Dorsolateral prefrontal cortex (tissue), 120 donors: ENCODE measurements at regions of chr10 and their contacts with region 1.

Region 1: DNA sequence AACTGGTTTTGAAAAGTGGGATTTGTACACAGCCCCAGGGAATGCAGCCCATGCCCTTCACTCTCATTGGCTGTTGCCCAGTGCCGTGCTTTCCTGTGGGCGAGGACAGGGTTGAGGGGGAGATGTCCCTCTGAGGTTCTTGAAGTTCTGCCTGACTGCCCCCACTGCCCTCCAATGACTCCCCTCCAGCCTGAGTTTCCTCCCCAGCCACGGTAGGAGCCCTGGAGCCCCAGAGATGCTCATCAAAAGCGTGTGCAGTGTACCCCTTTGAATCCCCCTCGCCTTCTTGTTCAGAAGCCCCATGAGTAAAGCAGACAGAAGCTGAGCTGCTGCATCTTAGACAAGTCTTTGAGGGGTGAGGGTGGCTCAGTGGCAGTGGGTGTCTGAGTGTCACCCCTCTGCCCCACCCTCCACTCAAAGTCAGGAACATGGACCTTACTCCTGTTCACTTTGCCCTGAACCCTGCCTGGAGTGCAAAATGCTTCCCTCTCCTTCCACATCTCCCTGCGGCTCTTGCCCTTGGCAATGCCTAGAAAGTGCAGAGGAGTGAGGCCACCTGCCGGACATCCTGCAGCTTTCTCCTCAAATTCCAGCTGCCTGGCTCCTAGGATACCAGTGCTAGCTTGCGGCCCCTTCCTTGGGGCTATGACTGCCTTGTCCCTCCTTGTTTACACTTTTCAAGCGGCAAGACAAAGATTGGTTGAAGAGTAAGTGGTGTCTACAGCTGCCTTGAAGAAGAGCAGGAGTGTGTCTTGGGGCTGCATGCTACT is 19.9 kb downstream of the FAM241B start:
- DNase-seq: peak in 1 of 10 donors; percentile 21
- H3K4me3 ChIP-seq: no peak overlapping the region
- H3K27ac ChIP-seq: no peak overlapping the region
- H3K27me3 ChIP-seq: peaks cover 0 to 15% (median 0%) of the 10 kb centered on the region in 45 donors
- CTCF ChIP-seq: no peak

Region 2: DNA sequence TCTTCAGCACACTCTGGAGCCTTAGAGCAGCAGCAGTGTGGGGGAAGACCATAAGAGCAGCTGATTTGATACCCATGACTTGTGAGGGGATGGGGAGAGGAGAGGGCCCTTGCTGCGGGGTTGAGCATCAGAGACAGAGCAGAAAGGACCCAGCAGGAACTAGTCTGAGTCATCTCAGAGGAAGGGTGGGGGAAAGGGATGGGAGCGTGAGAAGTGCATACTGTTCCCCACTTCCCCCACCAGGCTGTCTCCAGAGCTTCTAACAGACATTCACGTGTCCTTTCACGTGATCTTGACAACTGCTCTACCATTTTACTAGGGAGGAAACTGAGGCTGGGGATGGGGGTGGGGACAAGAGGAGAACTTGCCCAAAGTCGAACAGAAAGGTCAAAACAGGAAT is 18.8 kb after region 1 on chr10:
- intact Hi-C with region 1: loop called in 1 of 2 experiments (anchors 1 kb)
- DNase-seq: no peak
- H3K4me3 ChIP-seq: no peak overlapping the region
- H3K27ac ChIP-seq: no peak overlapping the region
- H3K27me3 ChIP-seq: peaks cover 0 to 39% (median 0%) of the 10 kb centered on the region in 45 donors
- CTCF ChIP-seq: no peak

Region 3: GRCh38 chr10:69819716-69820506 is 169.9 kb after region 1 on chr10:
- intact Hi-C with region 1: no loop called
- DNase-seq: no peak
- H3K4me3 ChIP-seq: no peak overlapping the region
- H3K27ac ChIP-seq: no peak overlapping the region
- H3K27me3 ChIP-seq: peaks cover 0 to 10% (median 0%) of the 10 kb centered on the region in 45 donors
- CTCF ChIP-seq: no peak